Activated B cell treated with CpG ODN at 0.5 μM for 24 hours (primary cell): ENCODE measurements at regions of chr15 and their contacts with region 1.

Region 1: GRCh38 chr15:99755692-99756409 is 22.6 kb upstream of the LYSMD4 start:
- DNase-seq: peak; percentile 24
- ATAC-seq: peak; percentile 94
- H3K4me3 Mint-ChIP-seq: no peak overlapping the region
- H3K27ac Mint-ChIP-seq: no peak overlapping the region
- H3K4me1 Mint-ChIP-seq: peaks cover 7% of the 10 kb centered on the region
- H3K27me3 Mint-ChIP-seq: no peaks in the 10 kb centered on the region
- CTCF ChIP-seq: peak; percentile 79

Region 2: GRCh38 chr15:98779463-98780071 is 976.3 kb before region 1 on chr15:
- CTCF ChIA-PET with region 1: no interaction called
- POLR2A ChIA-PET with region 1: no interaction called
- intact Hi-C with region 1: loop called (anchors 5 kb)
- DNase-seq: peak; percentile 60
- ATAC-seq: peak; percentile 81
- H3K4me3 Mint-ChIP-seq: no peak overlapping the region
- H3K27ac Mint-ChIP-seq: no peak overlapping the region
- H3K4me1 Mint-ChIP-seq: peaks cover 25% of the 10 kb centered on the region
- H3K27me3 Mint-ChIP-seq: peaks cover 17% of the 10 kb centered on the region
- CTCF ChIP-seq: no peak

Region 3: GRCh38 chr15:99104788-99105513 is 650.9 kb before region 1 on chr15 and contains the start of gene SYNM:
- CTCF ChIA-PET with region 1: interaction called, 3 read pairs
- POLR2A ChIA-PET with region 1: no interaction called
- intact Hi-C with region 1: loop called (anchors 10 kb)
- DNase-seq: peak; percentile 34
- ATAC-seq: peak; percentile 72
- H3K4me3 Mint-ChIP-seq: peak within 1 kb of the TSS; percentile 64
- H3K27ac Mint-ChIP-seq: no peak within 1 kb of the TSS
- H3K4me1 Mint-ChIP-seq: peaks cover 10% of the 10 kb centered on the region
- H3K27me3 Mint-ChIP-seq: peaks cover 42% of the 10 kb centered on the region
- CTCF ChIP-seq: no peak
- total RNA-seq, gene SYNM: 0.02 and 0.05 TPM in 2 replicates

Region 4: DNA sequence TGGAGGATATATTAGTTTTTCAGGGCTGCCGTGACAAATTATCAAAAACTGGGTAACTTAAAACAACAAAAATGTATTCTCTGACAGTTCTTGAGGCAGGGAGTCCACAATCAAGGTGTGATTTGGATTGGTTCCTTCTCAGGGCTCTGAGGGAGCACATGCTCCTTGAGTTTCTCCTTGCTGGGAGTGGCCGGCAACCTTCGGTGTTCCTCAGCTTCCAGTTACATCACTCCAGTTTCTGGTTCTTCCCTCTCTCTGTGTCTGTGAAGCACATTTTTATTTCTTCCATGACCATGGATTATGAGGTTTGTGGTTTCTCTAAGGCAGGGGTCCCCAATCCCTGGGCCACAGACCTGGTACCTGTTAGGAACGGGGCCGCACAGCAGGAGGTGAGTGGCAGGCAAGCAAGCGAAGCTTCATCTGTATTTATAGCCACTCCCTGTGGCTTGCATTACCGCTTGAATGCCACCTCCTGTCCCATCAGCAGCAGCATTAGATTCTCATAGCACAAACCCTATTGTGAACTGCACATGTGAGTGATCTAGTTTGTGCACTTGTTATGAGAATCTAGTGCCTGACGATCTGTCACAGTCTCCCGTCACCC is 480.2 kb before region 1 on chr15:
- CTCF ChIA-PET with region 1: interaction called, 70 read pairs
- POLR2A ChIA-PET with region 1: no interaction called
- intact Hi-C with region 1: loop called (anchors 1 kb)
- DNase-seq: no peak
- ATAC-seq: peak; percentile 34
- H3K4me3 Mint-ChIP-seq: no peak overlapping the region
- H3K27ac Mint-ChIP-seq: no peak overlapping the region
- H3K4me1 Mint-ChIP-seq: peaks cover 10% of the 10 kb centered on the region
- H3K27me3 Mint-ChIP-seq: no peaks in the 10 kb centered on the region
- CTCF ChIP-seq: no peak

Region 5: DNA sequence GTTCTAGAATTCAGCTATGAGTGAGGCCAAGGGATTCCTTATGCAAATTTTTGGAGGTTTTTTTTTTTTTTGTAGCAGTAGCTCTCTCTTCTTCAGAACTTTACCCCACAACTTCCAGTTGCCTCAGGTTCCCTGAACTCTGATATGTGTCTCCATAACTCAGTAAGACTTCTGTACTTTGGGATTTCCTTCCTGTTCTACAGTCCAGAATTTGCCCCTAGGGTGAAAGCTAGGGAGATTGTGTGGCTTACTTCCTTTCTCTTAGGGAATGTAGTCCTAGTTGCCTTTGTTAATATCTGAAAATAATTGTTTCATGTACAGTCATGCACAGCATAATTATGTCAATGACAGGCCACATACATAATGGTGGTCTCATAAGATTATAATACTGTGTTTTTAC is 473.7 kb before region 1 on chr15:
- CTCF ChIA-PET with region 1: interaction called, 7 read pairs
- POLR2A ChIA-PET with region 1: no interaction called
- intact Hi-C with region 1: loop called (anchors 1 kb)
- DNase-seq: no peak
- ATAC-seq: no peak
- H3K4me3 Mint-ChIP-seq: no peak overlapping the region
- H3K27ac Mint-ChIP-seq: no peak overlapping the region
- H3K4me1 Mint-ChIP-seq: peaks cover 11% of the 10 kb centered on the region
- H3K27me3 Mint-ChIP-seq: no peaks in the 10 kb centered on the region
- CTCF ChIP-seq: no peak

Region 6: GRCh38 chr15:99719096-99719541 is 36.7 kb before region 1 on chr15:
- CTCF ChIA-PET with region 1: interaction called, 5 read pairs
- POLR2A ChIA-PET with region 1: no interaction called
- intact Hi-C with region 1: loop called (anchors 5 kb)
- DNase-seq: no peak
- ATAC-seq: no peak
- H3K4me3 Mint-ChIP-seq: no peak overlapping the region
- H3K27ac Mint-ChIP-seq: no peak overlapping the region
- H3K4me1 Mint-ChIP-seq: peaks cover 41% of the 10 kb centered on the region
- H3K27me3 Mint-ChIP-seq: no peaks in the 10 kb centered on the region
- CTCF ChIP-seq: no peak

Region 7: GRCh38 chr15:99733268-99734039 is 22.4 kb before region 1 on chr15 and contains the start of gene LYSMD4:
- CTCF ChIA-PET with region 1: interaction called, 4 read pairs
- POLR2A ChIA-PET with region 1: no interaction called
- intact Hi-C with region 1: loop called (anchors 2 kb)
- DNase-seq: peak; percentile 95
- ATAC-seq: peak; percentile 99
- H3K4me3 Mint-ChIP-seq: peak within 1 kb of the TSS; percentile 85
- H3K27ac Mint-ChIP-seq: peak within 1 kb of the TSS; percentile 83
- H3K4me1 Mint-ChIP-seq: peaks cover 14% of the 10 kb centered on the region
- H3K27me3 Mint-ChIP-seq: no peaks in the 10 kb centered on the region
- CTCF ChIP-seq: no peak
- total RNA-seq, gene LYSMD4: 4.7 and 6.1 TPM in 2 replicates